Right ventricle myocardium inferior (tissue), 1 donor: ENCODE measurements at regions of chr2 and their contacts with region 1.

Region 1: DNA sequence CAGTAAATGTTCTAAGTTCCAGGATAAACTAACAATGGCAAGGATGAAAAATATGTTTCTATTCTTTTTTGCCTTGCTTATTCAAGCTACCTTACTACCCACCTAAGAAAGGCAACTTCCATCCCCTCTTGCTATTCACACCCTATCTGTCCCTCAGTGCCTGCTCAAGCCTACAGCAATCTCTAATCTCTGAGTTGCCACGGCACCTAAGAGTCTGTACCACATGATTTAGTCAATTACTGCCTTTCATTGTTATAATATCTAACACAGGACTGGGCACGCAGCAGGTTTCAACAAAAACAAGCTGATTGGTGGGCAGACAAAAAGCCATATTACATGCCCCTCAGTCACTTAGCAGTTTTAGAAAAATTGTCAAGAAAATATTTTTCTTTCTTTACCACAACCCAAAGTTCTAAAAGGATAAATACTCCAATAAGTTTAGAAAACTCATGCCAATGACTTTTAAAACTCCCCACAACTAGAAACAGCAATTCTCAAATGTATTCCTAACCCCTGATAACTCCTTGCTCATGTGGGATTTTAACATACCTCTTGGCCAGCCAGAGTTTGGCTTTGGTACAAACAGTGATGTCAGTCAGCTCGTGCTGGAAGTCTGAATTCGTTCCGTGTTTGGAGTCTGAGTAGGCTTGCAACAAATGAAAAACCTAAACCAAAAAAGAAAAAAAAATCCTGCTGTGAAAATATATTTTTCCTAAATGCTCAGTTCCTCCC is 117.3 kb upstream of the ZFP36L2 start:
- DNase-seq: peak; percentile 73
- ATAC-seq: peak; percentile 78

Region 2: DNA sequence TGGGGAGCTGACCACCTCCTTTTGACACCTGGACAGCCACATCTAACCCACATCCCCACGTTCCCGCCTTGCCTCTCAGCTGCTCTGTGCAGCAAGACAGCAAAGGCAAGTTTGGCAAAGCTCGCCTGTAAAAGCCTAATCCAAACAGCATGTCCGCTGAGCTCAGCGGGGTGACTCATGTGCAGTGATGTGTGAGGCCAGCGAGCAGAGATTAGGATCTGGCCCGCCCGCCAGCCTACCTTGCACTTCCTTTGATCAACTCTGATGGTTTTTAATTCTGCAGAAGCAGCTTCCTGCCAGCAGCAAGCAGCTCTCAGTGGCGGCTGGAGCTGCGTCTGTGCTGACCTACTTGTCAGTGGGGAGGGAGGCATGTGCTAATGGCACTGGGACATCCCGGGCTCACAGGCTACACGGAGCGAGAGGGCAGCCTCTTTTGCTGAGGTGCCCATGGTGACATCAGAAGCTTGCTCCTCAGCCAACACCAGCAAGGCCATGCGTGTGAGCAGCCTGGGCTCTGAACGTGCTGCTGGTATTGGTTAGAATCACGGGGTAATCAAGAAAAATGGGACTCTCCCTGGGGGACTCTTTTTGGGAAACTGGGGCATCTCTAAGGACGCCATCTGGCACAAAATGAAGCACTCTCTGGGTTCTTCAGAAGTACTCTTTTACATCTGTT is 1210.6 kb before region 1 on chr2:
- intact Hi-C with region 1: no loop called
- DNase-seq: peak; percentile 85
- ATAC-seq: peak; percentile 86

Region 3: GRCh38 chr2:43412121-43412753 is 68.5 kb after region 1 on chr2:
- intact Hi-C with region 1: loop called (anchors 5 kb)
- DNase-seq: no peak
- ATAC-seq: peak; percentile 45